Breast epithelium (tissue), 4 donors: ENCODE measurements at regions of chr5 and their contacts with region 1.

Region 1: DNA sequence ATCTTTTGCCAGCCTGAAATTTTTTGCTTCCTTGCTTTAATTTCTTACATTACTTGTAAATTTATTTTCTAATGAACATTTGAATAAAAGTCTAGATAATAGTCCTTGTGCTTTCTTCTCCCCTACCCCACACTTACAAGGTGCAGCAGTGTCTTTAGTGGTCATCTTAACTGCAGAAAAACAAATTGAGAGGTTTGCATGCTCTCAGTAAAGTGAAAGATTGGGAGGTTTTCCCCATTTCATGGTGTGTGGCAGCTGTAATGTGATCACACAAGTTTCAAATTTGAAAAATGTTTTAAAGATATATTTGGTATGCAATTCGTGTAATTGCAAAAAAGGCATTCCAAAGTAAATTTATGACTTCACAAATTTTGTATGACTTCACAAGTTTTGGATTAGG is 14.7 kb downstream of the APC start:
- DNase-seq: no peak
- H3K4me3 ChIP-seq: no peak overlapping the region
- H3K27ac ChIP-seq: no peak overlapping the region
- H3K4me1 ChIP-seq: no peaks in the 10 kb centered on the region
- H3K27me3 ChIP-seq: no peaks in the 10 kb centered on the region
- CTCF ChIP-seq: no peak
- POLR2A ChIP-seq: no peak

Region 2: GRCh38 chr5:112551419-112552032 is 200.8 kb before region 1 on chr5:
- intact Hi-C with region 1: loop called (anchors 5 kb)
- DNase-seq: peak in 1 of 2 donors; percentile 26
- H3K4me3 ChIP-seq: no peak overlapping the region
- H3K27ac ChIP-seq: no peak overlapping the region
- H3K4me1 ChIP-seq: no peaks in the 10 kb centered on the region
- H3K27me3 ChIP-seq: no peaks in the 10 kb centered on the region
- CTCF ChIP-seq: peak; percentile 43 to 88 (median 73)
- POLR2A ChIP-seq: no peak

Region 3: GRCh38 chr5:112737463-112738190 is 14.7 kb before region 1 on chr5 and contains the start of gene APC:
- intact Hi-C with region 1: no loop called
- DNase-seq: peak; percentile 85 to 86
- H3K4me3 ChIP-seq: peak within 1 kb of the TSS; percentile 55 to 78 (median 59)
- H3K27ac ChIP-seq: peak within 1 kb of the TSS; percentile 31 to 78
- H3K4me1 ChIP-seq: no peaks in the 10 kb centered on the region
- H3K27me3 ChIP-seq: no peaks in the 10 kb centered on the region
- CTCF ChIP-seq: peak in 2 of 3 donors; percentile 21 to 36
- POLR2A ChIP-seq: no peak
- total RNA-seq, gene APC: 51.5 to 73.9 (median 65.1) TPM